CD4-positive, alpha-beta T cell (primary cell): ENCODE measurements at regions of chr19 and their contacts with region 1.

Region 1: DNA sequence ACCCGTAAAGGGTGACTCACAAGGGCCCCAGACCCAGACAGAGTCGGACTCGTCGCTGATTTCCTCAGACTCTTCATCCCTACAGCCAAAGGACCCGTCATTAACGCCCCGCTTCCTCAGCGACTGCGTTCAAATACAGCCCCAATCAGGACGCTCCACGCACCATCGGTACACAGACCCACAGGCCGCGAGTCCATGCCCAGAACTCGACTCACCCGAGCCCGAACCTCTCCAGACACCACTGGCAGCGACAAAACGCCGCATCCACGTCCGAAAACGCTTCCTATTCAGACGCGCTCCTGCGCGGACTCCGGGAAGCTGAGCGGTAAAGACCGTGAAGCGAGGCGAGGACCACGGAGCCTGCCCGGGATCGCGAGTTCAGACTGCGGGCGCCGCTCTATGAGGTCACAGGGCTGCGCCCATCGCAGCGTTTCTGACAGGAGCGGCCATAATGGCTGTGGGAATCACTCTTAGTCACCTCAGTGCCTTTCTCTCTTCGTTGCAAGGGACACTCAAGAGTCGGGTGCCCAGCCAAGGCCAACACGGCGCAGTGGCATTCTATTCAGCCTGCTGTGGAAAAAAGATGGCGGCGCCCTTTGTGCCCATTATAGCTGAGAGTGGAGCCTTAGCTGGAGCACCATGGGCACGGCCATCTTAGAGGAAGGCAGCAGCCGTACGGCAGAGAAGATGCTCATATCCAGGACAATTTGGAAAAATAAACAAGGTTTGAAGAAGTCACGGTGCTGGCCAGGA is at the start of gene ZNF614:
- DNase-seq: peak; percentile 71 to 92 (median 82)
- ATAC-seq: peak; percentile 85
- H3K4me3 ChIP-seq: peak within 1 kb of the TSS; percentile 85
- H3K4me3 Mint-ChIP-seq: peak within 1 kb of the TSS; percentile 95
- H3K27ac ChIP-seq: peak within 1 kb of the TSS; percentile 89 to 90
- H3K27ac Mint-ChIP-seq: peak within 1 kb of the TSS; percentile 93
- H3K4me1 ChIP-seq: peaks cover 16% of the 10 kb centered on the region
- H3K4me1 Mint-ChIP-seq: peaks cover 38% of the 10 kb centered on the region
- H3K27me3 ChIP-seq: no peaks in the 10 kb centered on the region
- H3K27me3 Mint-ChIP-seq: no peaks in the 10 kb centered on the region
- CTCF ChIP-seq: no peak
- total RNA-seq, gene ZNF614: 9.7 to 10.5 TPM

Region 2: GRCh38 chr19:51272183-51272810 is 755.9 kb before region 1 on chr19:
- CTCF ChIA-PET with region 1: no interaction called
- POLR2A ChIA-PET with region 1: no interaction called
- intact Hi-C with region 1: no loop called
- DNase-seq: peak in 4 of 14 experiments; percentile 14 to 50 (median 38)
- ATAC-seq: peak; percentile 52
- H3K4me3 ChIP-seq: no peak overlapping the region
- H3K4me3 Mint-ChIP-seq: no peak overlapping the region
- H3K27ac ChIP-seq: no peak overlapping the region
- H3K27ac Mint-ChIP-seq: peak overlapping the region; percentile 49
- H3K4me1 ChIP-seq: no peaks in the 10 kb centered on the region
- H3K4me1 Mint-ChIP-seq: peaks cover 16% of the 10 kb centered on the region
- H3K27me3 ChIP-seq: no peaks in the 10 kb centered on the region
- H3K27me3 Mint-ChIP-seq: peaks cover 11% of the 10 kb centered on the region
- CTCF ChIP-seq: no peak

Region 3: GRCh38 chr19:52007806-52008557 is 20.2 kb before region 1 on chr19 and contains the start of gene ZNF615:
- CTCF ChIA-PET with region 1: interaction called, 3 read pairs
- POLR2A ChIA-PET with region 1: interaction called, 9 read pairs
- intact Hi-C with region 1: loop called in 1 of 2 experiments (anchors 2 kb)
- DNase-seq: peak; percentile 78 to 92 (median 82)
- ATAC-seq: peak; percentile 91
- H3K4me3 ChIP-seq: peak within 1 kb of the TSS; percentile 95
- H3K4me3 Mint-ChIP-seq: peak within 1 kb of the TSS; percentile 95
- H3K27ac ChIP-seq: peak within 1 kb of the TSS; percentile 82 to 88
- H3K27ac Mint-ChIP-seq: peak within 1 kb of the TSS; percentile 88
- H3K4me1 ChIP-seq: peaks cover 12% of the 10 kb centered on the region
- H3K4me1 Mint-ChIP-seq: peaks cover 24% of the 10 kb centered on the region
- H3K27me3 ChIP-seq: no peaks in the 10 kb centered on the region
- H3K27me3 Mint-ChIP-seq: no peaks in the 10 kb centered on the region
- CTCF ChIP-seq: no peak
- total RNA-seq, gene ZNF615: 8.9 to 9.2 TPM